ENCODE measurements at regions of chr5 and their contacts with region 1.

Region 1: GRCh38 chr5:101024299-101024698 is 121.2 kb upstream of the ST8SIA4 start:
- DNase-seq: no peak
- ATAC-seq: peak; percentile 96
- H3K4me3 Mint-ChIP-seq: no peak overlapping the region
- H3K27ac Mint-ChIP-seq: no peak overlapping the region
- H3K4me1 Mint-ChIP-seq: peaks cover 13% of the 10 kb centered on the region
- H3K27me3 Mint-ChIP-seq: peaks cover under 1% of the 10 kb centered on the region
- CTCF ChIP-seq: no peak

Region 2: DNA sequence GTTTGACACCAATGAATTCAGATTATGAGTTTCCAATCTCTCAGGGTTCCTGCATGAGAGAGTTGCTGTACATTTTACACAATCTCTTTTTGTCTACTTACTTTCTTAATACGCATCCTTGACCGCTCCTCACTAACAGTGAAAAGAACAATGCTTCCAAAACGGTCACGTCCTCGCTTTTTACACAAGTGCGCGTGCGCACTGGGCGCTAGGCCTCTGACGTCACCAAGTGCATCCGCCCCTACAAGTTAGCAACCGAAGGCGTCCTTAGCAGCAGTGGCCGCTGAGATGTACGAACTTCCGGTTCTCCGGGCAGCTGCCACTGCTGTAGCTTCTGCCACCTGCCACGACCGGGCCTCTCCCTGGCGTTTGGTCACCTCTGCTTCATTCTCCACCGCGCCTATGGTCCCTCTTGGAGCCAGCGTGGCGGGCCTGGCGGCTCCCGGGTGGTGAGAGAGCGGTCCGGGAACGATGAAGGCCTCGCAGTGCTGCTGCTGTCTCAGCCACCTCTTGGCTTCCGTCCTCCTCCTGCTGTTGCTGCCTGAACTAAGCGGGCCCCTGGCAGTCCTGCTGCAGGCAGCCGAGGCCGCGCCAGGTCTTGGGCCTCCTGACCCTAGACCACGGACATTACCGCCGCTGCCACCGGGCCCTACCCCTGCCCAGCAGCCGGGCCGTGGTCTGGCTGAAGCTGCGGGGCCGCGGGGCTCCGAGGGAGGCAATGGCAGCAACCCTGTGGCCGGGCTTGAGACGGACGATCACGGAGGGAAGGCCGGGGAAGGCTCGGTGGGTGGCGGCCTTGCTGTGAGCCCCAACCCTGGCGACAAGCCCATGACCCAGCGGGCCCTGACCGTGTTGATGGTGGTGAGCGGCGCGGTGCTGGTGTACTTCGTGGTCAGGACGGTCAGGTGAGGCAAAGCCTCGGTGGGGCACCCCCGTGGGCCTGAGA is 489.0 kb before region 1 on chr5 and contains the start of gene FAM174A:
- CTCF ChIA-PET with region 1: no interaction called
- POLR2A ChIA-PET with region 1: no interaction called
- intact Hi-C with region 1: loop called (anchors 2 kb)
- DNase-seq: peak; percentile 87
- ATAC-seq: peak; percentile 91
- H3K4me3 Mint-ChIP-seq: peak within 1 kb of the TSS; percentile 99
- H3K27ac Mint-ChIP-seq: peak within 1 kb of the TSS; percentile 91
- H3K4me1 Mint-ChIP-seq: peaks cover 21% of the 10 kb centered on the region
- H3K27me3 Mint-ChIP-seq: peaks cover 2% of the 10 kb centered on the region
- CTCF ChIP-seq: no peak
- total RNA-seq, gene FAM174A: 4.1 and 5.2 TPM in 2 replicates

Region 3: GRCh38 chr5:100852988-100853449 is 171.3 kb before region 1 on chr5:
- CTCF ChIA-PET with region 1: no interaction called
- POLR2A ChIA-PET with region 1: no interaction called
- intact Hi-C with region 1: loop called (anchors 1 kb)
- DNase-seq: no peak
- ATAC-seq: peak; percentile 92
- H3K4me3 Mint-ChIP-seq: peak overlapping the region; percentile 55
- H3K27ac Mint-ChIP-seq: peak overlapping the region; percentile 83
- H3K4me1 Mint-ChIP-seq: peaks cover 55% of the 10 kb centered on the region
- H3K27me3 Mint-ChIP-seq: no peaks in the 10 kb centered on the region
- CTCF ChIP-seq: no peak

Region 4: GRCh38 chr5:100950985-100951384 is 73.3 kb before region 1 on chr5:
- CTCF ChIA-PET with region 1: no interaction called
- POLR2A ChIA-PET with region 1: no interaction called
- intact Hi-C with region 1: no loop called
- DNase-seq: no peak
- ATAC-seq: no peak
- H3K4me3 Mint-ChIP-seq: no peak overlapping the region
- H3K27ac Mint-ChIP-seq: no peak overlapping the region
- H3K4me1 Mint-ChIP-seq: no peaks in the 10 kb centered on the region
- H3K27me3 Mint-ChIP-seq: no peaks in the 10 kb centered on the region
- CTCF ChIP-seq: no peak

Region 5: GRCh38 chr5:100974085-100974484 is 50.2 kb before region 1 on chr5:
- CTCF ChIA-PET with region 1: no interaction called
- POLR2A ChIA-PET with region 1: no interaction called
- intact Hi-C with region 1: no loop called
- DNase-seq: no peak
- ATAC-seq: no peak
- H3K4me3 Mint-ChIP-seq: no peak overlapping the region
- H3K27ac Mint-ChIP-seq: no peak overlapping the region
- H3K4me1 Mint-ChIP-seq: no peaks in the 10 kb centered on the region
- H3K27me3 Mint-ChIP-seq: peaks cover 5% of the 10 kb centered on the region
- CTCF ChIP-seq: no peak

Region 6: GRCh38 chr5:101009758-101010519 is 14.4 kb before region 1 on chr5:
- CTCF ChIA-PET with region 1: no interaction called
- POLR2A ChIA-PET with region 1: no interaction called
- intact Hi-C with region 1: no loop called
- DNase-seq: no peak
- ATAC-seq: peak; percentile 60
- H3K4me3 Mint-ChIP-seq: no peak overlapping the region
- H3K27ac Mint-ChIP-seq: no peak overlapping the region
- H3K4me1 Mint-ChIP-seq: peaks cover 7% of the 10 kb centered on the region
- H3K27me3 Mint-ChIP-seq: no peaks in the 10 kb centered on the region
- CTCF ChIP-seq: no peak

Region 7: DNA sequence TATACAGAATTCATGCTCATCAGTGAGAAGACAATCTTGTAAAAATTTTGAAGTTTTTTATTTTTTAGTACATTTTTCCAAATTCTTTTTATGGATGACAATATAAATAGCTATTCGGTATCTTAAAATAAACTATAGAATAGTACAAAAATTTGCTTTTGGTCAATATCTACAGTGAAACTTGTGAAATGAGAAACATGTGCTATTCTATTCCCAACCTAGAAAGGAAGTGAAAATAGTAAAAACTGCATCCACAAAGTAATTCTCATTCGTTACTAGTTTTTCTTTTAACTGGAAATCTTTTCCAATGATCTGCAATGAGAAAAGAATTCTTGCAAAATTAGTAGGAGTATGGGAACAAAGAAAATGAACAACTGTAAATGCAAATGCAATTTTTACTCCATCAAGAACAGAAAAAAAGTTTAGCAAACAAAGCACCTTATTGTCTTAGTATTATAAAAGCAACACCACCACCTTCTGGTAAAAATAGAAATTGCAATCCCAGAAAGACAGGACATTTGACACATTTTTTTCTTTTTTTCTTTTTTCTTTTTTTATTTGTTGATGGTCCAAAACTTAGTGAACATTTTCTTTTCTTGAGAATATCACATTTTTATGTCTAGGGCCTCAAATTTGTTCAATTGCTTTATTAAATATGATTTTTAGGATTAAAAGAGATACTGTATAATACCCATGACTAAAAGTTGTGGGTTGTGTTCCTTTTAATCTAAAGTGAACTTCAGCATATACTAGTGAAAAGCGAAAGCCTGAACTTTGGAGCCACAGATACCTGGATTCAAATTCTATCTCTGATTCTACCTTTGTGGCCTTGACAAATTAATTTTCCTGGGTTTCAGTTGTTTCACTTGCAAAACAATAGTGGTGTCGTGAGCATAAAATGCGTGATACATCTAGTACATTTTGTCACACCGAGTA is 1199.5 kb after region 1 on chr5:
- CTCF ChIA-PET with region 1: no interaction called
- POLR2A ChIA-PET with region 1: no interaction called
- intact Hi-C with region 1: no loop called
- DNase-seq: no peak
- ATAC-seq: no peak
- H3K4me3 Mint-ChIP-seq: no peak overlapping the region
- H3K27ac Mint-ChIP-seq: no peak overlapping the region
- H3K4me1 Mint-ChIP-seq: no peaks in the 10 kb centered on the region
- H3K27me3 Mint-ChIP-seq: peaks cover 4% of the 10 kb centered on the region
- CTCF ChIP-seq: peak; percentile 86

Measured in activated B cell treated with CpG ODN at 0.5 μM for 24 hours (primary cell).